ENCODE measurements at regions of chr1 and their contacts with region 1.

Region 1: DNA sequence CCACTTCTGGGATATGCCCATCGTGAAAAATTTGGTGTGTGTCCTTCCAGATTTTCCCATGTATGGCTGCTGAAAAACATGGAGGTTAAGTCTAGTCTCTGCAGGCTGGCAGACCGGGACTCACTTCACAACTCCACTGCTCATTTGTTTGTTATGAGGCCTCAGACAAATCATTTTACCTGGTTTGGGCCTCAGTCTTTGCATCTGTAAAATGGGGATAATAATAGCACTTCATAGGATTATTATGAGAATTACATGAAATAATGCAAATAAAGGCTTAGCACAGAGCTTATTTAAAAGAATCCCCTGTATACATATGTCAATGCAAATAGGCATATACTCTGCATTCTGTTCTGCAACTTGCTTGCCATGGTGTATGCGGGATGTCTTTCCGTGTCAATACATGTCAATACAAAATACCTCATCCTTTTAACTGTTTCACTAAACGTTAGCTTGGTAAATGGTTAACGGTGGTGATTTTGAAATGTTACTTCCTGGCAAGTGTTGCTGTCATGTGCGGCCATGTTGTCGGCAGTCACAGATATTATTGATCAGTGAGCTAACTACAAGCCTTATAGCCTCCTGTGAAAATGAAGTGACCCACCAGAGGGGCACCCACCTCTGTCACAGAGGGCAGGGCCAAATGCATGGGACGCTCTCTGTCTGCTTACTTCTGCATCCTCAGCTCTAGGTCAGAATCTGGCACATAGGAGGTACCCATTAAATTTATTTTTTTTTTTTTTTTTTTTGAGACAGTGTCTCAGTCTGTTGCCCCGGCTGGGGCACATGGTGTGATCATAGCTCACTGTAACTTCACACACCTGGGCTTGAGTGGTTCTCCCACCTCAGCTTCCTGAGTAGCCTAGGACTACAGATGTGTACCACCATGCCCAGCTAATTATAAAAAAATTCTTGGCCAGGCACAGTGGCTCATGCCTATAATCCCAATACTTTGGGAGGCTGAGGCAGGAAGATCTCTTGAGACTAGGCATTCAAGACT is 4.3 kb downstream of the LCK start:
- DNase-seq: peak in 5 of 14 experiments; percentile 19 to 60 (median 53)
- ATAC-seq: peak; percentile 39
- H3K4me3 ChIP-seq: peak overlapping the region; percentile 71
- H3K4me3 Mint-ChIP-seq: peak overlapping the region; percentile 91
- H3K27ac ChIP-seq: peak overlapping the region; percentile 37 to 94
- H3K27ac Mint-ChIP-seq: peak overlapping the region; percentile 99
- H3K4me1 ChIP-seq: peaks cover 79% of the 10 kb centered on the region
- H3K4me1 Mint-ChIP-seq: peaks cover 57% of the 10 kb centered on the region
- H3K27me3 ChIP-seq: no peaks in the 10 kb centered on the region
- H3K27me3 Mint-ChIP-seq: no peaks in the 10 kb centered on the region
- CTCF ChIP-seq: no peak

Region 2: GRCh38 chr1:32128479-32128878 is 126.9 kb before region 1 on chr1:
- CTCF ChIA-PET with region 1: no interaction called
- POLR2A ChIA-PET with region 1: no interaction called
- intact Hi-C with region 1: no loop called
- DNase-seq: no peak
- ATAC-seq: no peak
- H3K4me3 ChIP-seq: no peak overlapping the region
- H3K4me3 Mint-ChIP-seq: no peak overlapping the region
- H3K27ac ChIP-seq: no peak overlapping the region
- H3K27ac Mint-ChIP-seq: peak overlapping the region; percentile 30
- H3K4me1 ChIP-seq: peaks cover 13% of the 10 kb centered on the region
- H3K4me1 Mint-ChIP-seq: peaks cover 37% of the 10 kb centered on the region
- H3K27me3 ChIP-seq: no peaks in the 10 kb centered on the region
- H3K27me3 Mint-ChIP-seq: no peaks in the 10 kb centered on the region
- CTCF ChIP-seq: no peak

Region 3: GRCh38 chr1:32273388-32274208 is 18.2 kb after region 1 on chr1:
- CTCF ChIA-PET with region 1: interaction called, 4 read pairs
- POLR2A ChIA-PET with region 1: interaction called, 543 read pairs
- intact Hi-C with region 1: loop called (anchors 1 to 2 kb)
- DNase-seq: peak; percentile 51 to 92 (median 84)
- ATAC-seq: peak; percentile 89
- H3K4me3 ChIP-seq: peak overlapping the region; percentile 44
- H3K4me3 Mint-ChIP-seq: peak overlapping the region; percentile 87
- H3K27ac ChIP-seq: peak overlapping the region; percentile 60 to 78
- H3K27ac Mint-ChIP-seq: peak overlapping the region; percentile 93
- H3K4me1 ChIP-seq: peaks cover 76% of the 10 kb centered on the region
- H3K4me1 Mint-ChIP-seq: peaks cover 56% of the 10 kb centered on the region
- H3K27me3 ChIP-seq: no peaks in the 10 kb centered on the region
- H3K27me3 Mint-ChIP-seq: no peaks in the 10 kb centered on the region
- CTCF ChIP-seq: no peak

Region 4: DNA sequence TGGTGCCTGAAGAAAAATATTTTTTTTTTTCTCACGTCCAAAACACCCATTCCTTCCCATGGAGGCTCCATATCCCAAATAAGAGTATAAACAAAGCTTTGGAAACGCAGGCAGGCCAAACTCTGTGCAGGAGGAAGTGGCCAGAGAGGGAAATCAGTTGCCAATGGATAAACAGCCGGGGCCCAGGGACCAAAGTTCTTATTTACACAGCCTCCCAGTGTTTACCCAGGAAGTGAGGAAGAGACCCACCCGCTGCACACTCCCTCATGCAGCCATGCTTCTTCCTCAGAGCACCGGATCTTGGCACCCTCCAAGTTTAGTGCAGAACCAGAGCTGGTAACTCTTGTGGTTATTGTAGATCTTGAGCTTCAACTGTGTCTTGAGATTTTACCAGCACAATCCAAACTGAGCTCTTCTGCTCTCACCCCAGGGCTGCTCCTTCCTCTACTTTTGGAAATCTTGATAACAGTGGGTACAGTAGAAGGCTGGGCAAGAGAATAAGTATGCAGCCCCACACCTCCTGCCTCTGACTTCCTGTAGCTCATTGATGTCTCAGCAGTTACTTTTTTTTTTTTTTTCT is 66.4 kb after region 1 on chr1:
- CTCF ChIA-PET with region 1: interaction called, 3 read pairs
- POLR2A ChIA-PET with region 1: interaction called, 32 read pairs
- intact Hi-C with region 1: no loop called
- DNase-seq: peak in 10 of 14 experiments; percentile 7 to 70 (median 29)
- ATAC-seq: peak; percentile 87
- H3K4me3 ChIP-seq: peak overlapping the region; percentile 25
- H3K4me3 Mint-ChIP-seq: peak overlapping the region; percentile 62
- H3K27ac ChIP-seq: peak overlapping the region; percentile 12 to 49
- H3K27ac Mint-ChIP-seq: peak overlapping the region; percentile 82
- H3K4me1 ChIP-seq: peaks cover 62% of the 10 kb centered on the region
- H3K4me1 Mint-ChIP-seq: peaks cover 51% of the 10 kb centered on the region
- H3K27me3 ChIP-seq: no peaks in the 10 kb centered on the region
- H3K27me3 Mint-ChIP-seq: no peaks in the 10 kb centered on the region
- CTCF ChIP-seq: no peak

Measured in CD4-positive, alpha-beta T cell (primary cell).